ENCODE measurements at regions of chr11 and their contacts with region 1.

Region 1: DNA sequence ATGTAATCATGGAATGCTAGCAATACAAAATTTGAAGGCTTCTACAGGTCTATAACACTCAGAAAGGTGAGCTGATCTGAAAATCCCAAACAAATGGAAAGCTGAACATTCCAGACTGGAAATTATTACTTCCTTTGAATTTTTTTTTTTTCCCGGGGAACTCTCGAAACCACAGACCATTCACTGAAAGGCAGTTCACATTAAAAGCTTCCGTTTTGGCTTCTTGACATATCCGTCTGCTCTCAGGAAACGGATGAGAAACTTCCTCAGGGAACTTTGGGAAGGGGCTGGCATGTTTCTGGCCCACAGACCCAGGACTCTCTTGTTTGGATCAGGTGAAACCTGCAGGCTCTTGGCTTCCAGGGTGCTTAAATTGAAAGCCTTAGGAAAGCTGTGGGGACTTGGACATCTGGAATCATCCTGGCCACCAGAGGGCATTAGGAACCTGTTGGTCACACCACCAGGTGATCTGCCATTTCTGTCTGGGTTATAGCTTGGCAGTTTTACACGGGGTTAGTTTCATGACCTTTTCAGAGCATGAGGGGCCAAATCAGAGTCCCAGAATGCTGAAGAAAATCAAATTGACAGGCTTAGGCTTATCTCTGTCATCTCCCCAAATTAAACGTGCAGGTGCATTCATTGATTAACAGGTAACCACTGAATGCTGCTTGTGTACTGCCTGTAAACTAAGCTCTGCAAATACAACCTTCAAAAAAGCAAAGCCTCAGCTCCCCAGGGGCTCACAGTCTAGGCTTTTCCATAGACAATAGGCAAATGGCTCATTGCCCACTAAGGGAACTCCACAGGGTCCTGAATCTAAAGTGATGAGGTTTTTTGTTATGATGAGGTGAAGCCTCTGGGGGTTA is 22.7 kb upstream of the GRAMD1B start:
- DNase-seq: peak; percentile 78
- ATAC-seq: peak; percentile 89
- H3K4me3 Mint-ChIP-seq: no peak overlapping the region
- H3K27ac Mint-ChIP-seq: peak overlapping the region; percentile 49; the same call in 1 of the 2 replicates
- H3K4me1 Mint-ChIP-seq: peaks cover 30% of the 10 kb centered on the region
- H3K27me3 Mint-ChIP-seq: peaks cover 36% of the 10 kb centered on the region
- CTCF ChIP-seq: peak; percentile 45; the same call in 1 of the 2 replicates

Region 2: DNA sequence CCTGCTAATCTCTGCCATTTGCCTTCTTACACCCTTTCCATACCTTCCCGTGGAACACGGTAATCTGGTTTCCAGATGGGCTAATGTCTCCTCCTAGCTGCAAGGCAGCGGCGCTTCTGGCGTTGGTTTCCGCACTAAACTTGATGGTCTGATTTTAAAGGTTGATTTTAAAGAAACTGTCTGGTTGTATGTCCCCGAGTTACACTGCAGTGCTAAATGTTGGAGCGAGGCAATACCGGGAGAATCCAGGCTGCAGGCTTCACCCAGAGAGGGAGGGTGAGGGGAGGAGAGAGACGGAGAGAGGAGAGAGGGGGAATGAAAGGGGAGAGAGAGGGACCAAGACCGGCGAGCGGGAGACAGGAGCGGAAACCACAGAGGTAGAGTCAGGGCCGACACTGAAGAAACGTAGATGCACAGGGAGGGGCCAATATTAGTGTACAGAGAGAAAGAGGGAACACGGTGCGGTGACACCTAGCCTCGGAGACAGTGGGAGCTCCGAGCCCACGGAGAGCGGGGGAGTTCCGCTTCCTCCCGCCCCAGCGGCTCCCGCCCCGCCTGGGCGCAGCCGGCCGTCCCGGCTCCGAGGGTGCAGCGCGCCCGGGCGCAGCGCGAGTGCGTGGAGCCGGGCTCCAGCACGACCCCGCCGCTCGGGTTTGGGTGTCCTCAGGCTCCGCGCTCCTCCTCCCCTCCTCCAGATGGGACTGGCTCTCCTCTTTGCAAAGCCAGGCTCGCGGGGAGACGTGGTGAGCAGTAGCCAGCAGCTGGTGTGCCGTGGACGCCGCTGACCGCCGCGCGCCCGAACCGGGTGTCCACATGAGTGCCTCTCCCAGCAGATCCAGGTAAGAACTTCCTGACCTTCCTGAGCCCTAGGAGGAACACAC is 49.2 kb before region 1 on chr11:
- CTCF ChIA-PET with region 1: interaction called, 15 read pairs
- POLR2A ChIA-PET with region 1: no interaction called
- DNase-seq: peak; percentile 38
- ATAC-seq: peak; percentile 92
- H3K4me3 Mint-ChIP-seq: peak overlapping the region; percentile 85
- H3K27ac Mint-ChIP-seq: no peak overlapping the region
- H3K4me1 Mint-ChIP-seq: peaks cover 12% of the 10 kb centered on the region
- H3K27me3 Mint-ChIP-seq: peaks cover 67% of the 10 kb centered on the region
- CTCF ChIP-seq: no peak

Region 3: GRCh38 chr11:123438191-123438627 is 30.8 kb after region 1 on chr11:
- CTCF ChIA-PET with region 1: interaction called, 65 read pairs
- POLR2A ChIA-PET with region 1: no interaction called
- DNase-seq: peak; percentile 28
- ATAC-seq: peak; percentile 87
- H3K4me3 Mint-ChIP-seq: no peak overlapping the region
- H3K27ac Mint-ChIP-seq: peak overlapping the region; percentile 42; the same call in 1 of the 2 replicates
- H3K4me1 Mint-ChIP-seq: peaks cover 49% of the 10 kb centered on the region
- H3K27me3 Mint-ChIP-seq: peaks cover 3% of the 10 kb centered on the region; the same call in 1 of the 2 replicates
- CTCF ChIP-seq: no peak

Region 4: GRCh38 chr11:123478352-123478987 is 71.1 kb after region 1 on chr11:
- CTCF ChIA-PET with region 1: interaction called, 217 read pairs
- POLR2A ChIA-PET with region 1: interaction called, 5 read pairs
- DNase-seq: peak; percentile 64
- ATAC-seq: peak; percentile 81
- H3K4me3 Mint-ChIP-seq: no peak overlapping the region
- H3K27ac Mint-ChIP-seq: no peak overlapping the region
- H3K4me1 Mint-ChIP-seq: peaks cover 40% of the 10 kb centered on the region
- H3K27me3 Mint-ChIP-seq: no peaks in the 10 kb centered on the region
- CTCF ChIP-seq: no peak; the same call in none of the 2 replicates

Region 5: GRCh38 chr11:123525511-123525918 is 118.2 kb after region 1 on chr11:
- CTCF ChIA-PET with region 1: interaction called, 12 read pairs
- POLR2A ChIA-PET with region 1: no interaction called
- DNase-seq: no peak
- ATAC-seq: peak; percentile 74
- H3K4me3 Mint-ChIP-seq: no peak overlapping the region
- H3K27ac Mint-ChIP-seq: no peak overlapping the region
- H3K4me1 Mint-ChIP-seq: peaks cover 56% of the 10 kb centered on the region
- H3K27me3 Mint-ChIP-seq: no peaks in the 10 kb centered on the region
- CTCF ChIP-seq: no peak

Measured in WTC11 (cell line).